HEK293T (cell line): ENCODE measurements at regions of chr9 and their contacts with region 1.

Region 1: DNA sequence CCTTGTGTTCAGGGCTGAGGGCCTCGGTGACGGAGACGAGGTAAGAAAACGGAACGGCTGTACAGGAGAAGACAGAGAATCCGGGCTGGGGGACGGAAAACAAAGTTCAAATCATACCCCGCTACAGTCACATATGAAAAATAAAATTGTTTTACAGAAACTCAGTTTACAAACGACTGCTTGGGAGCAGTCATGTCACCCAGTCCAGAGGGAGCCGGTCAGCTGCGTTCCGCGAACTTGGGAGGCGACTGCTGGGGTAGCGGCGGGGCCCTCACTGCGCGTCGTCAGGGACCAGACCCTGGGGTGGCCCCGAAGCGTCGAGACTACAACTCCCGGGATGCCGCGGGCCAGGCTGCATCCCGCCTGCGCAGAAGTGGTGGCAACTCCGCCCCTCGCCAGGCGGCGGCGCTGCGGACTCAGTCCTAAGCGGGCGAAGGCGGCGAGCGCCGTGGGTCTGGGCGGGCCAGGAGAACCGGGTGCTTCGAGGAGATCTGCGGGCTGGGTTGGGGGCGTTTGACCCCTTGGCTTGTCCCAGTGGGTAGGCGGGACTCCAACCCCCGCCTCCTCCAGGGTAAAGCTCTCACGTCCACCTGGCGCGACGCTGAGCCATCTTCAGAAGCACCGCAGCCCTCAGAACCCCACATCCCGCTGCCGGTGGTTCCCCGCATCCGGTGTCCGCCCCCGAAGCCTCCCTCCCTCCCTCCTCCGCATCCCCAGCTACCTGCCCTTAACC is 4.0 kb downstream of the SIT1 start:
- DNase-seq: peak; percentile 94

Region 2: GRCh38 chr9:35563791-35564197 is 82.9 kb before region 1 on chr9:
- CTCF ChIA-PET with region 1: no interaction called
- POLR2A ChIA-PET with region 1: no interaction called
- DNase-seq: no peak

Region 3: DNA sequence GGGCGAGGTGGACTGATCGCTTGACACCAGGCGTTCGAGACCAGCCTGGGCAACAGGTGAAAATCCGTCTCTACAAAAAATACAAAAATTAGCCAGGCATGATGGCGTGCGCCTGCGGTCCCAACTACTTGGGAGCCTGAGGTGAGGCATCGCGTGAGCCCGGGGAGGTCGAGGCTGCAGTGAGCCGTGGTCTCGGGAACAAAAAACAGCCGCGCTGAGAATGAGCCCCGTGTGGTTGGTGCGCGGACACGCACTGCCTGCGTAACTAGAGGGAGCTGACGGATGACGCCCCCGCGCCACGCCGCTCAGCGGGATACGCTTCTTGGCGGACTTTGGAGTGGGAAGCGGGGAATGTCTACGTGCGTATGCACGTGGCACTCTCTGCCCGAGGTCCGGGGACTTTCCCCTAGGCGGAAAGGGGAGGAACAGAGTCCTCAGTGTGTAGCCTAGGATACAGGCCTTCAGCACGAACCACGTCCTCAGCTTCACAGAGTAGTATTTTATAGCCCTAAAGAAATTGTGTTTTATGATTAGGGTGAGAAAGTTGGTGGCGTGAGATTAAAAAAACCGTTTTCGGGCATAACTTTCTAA is 10.9 kb after region 1 on chr9 and contains the start of gene RMRP:
- CTCF ChIA-PET with region 1: interaction called, 16 read pairs
- POLR2A ChIA-PET with region 1: interaction called, 35 read pairs
- DNase-seq: peak; percentile 89